Left cardiac atrium (tissue), 4 donors: ENCODE measurements at regions of chr3 and their contacts with region 1.

Region 1: DNA sequence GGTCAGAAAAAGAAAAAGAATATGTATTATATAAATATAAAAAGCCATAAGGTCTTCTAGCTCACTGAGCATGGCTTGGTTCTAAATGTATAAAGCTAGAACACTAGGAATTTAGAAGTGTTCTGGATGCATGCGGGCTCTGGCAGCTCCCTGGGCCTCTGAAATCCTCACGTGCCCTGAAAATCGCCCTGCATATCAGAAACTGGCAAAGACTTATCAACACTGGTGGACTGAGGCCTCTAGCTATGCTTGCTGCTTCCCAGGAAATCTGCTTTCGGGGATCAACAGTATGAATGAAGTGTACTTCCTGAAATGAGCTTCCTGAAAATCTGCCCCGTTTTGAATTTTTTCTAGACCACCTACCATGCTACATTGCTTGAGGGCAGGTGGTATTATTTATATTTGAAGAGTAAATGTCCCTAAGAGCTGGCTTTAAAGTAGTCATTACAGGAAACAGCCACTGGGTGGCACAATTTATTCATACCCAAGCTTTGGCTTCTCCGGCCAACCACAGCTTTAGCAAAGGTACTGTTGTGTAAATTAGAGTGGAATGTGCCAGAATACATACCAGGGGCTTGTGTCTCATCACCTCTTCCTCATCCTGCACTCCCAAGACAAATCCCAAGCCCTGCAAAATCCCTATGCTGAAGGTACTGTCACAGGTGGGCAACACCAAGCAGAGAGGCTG is 17.7 kb downstream of the CRTAP start:
- DNase-seq: peak; percentile 32
- ATAC-seq: peak; percentile 67 to 86

Region 2: DNA sequence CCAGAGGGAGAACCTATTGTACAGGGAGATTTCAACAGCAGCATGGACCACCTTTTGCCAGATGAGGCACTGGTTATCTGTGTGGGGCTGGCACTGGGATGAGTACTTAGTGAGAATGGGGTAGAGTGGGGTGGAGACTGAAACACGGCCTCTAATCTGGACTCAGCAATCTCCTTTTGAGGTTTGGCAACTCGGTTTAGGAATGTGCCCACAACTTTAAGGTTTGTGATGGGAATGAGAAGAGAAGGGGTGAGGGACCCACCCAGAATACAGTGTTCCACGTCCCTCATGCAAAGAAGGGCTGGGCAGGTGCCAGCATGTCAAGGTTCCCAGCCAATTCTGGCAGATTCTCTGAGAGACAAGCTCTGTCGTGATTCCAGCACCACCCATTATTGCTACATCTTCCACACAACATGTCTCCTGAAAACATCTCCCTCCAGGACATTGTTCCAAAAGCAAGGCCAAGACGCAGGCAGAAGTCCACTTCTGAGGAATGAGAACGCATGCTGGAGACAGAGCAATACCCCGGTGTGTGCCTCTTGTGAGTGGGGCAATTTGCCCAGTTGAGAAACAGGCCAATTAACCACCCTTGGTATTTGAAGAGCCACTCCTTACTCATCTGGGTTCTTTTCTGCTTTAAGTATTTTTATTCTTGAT is 217.6 kb before region 1 on chr3:
- intact Hi-C with region 1: no loop called
- DNase-seq: peak; percentile 41
- ATAC-seq: peak in 1 of 2 donors; percentile 92

Region 3: DNA sequence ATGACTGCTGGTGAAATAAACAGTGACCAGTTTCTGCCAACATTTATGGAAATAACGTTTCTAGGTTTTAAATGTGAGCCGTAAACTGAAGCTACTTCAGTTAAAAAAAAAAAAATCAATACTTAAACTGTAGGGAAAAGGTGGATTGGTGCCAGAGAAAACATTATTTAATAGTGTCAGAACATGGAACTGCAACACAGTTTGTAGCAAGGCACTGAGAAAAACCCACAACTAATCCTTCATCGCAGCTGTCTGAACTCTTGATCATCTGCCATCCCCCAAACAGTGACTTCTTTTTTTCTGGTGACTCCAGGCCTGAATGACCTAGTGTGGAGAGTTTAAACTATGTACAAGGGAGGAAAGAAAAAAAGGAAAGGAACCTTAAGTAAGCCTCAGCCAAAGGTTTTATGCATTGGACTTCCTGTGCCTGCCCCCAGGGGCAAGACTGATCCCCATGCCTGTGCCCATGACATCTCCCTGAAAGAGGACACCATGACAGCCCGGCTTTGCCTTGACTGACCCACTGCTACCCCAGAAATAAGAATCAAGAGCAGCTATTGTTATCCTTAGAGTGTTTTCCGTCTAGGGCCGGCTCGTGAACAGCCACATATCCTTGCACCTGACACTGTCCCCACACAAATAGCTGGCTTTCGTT is 15.4 kb after region 1 on chr3:
- intact Hi-C with region 1: no loop called
- DNase-seq: no peak
- ATAC-seq: peak; percentile 28 to 45

Region 4: DNA sequence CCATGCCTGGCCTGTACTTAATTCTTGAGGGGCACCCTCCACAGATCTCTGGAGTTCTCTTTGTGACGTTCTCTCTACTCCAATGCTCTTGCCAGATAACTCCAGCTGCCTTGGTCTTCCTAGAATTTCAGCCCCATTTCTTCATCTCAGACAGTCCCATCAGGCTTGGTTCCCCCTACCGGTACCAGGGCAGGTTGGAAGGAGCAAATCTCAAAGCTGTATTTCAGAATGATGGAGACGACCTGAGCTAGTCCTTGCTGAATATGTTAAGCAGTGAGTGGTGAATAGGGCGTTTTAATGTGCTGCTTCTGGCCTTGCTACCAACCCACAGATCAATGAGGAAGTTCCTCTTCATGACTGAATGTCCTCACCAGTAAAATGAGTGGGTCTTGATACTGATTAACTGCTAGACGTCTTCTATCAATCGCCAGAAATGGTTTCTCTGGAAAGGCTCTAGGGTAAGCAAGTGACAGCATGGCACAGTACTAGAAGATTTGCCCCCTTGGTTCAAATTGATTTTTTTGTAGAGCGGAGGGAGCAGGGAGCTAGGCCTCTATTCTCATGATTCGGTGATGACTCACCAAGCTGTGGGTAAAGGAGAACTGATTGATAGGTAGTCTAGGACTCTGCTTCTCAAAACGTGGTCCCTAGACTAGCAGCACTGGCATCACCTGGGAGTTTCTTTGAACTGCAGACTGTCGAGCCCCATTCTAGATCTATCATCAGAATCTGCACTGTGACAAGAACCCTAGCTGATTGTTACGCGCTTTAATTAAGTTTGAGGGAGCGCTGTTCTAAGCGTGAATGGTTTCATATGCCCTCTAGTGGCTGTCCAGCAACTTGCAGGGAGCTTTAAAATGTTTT is 241.0 kb after region 1 on chr3:
- intact Hi-C with region 1: loop called (anchors 1 to 5 kb)
- DNase-seq: peak; percentile 31
- ATAC-seq: peak; percentile 68 to 88